ENCODE measurements at regions of chr18 and their contacts with region 1.

Region 1: DNA sequence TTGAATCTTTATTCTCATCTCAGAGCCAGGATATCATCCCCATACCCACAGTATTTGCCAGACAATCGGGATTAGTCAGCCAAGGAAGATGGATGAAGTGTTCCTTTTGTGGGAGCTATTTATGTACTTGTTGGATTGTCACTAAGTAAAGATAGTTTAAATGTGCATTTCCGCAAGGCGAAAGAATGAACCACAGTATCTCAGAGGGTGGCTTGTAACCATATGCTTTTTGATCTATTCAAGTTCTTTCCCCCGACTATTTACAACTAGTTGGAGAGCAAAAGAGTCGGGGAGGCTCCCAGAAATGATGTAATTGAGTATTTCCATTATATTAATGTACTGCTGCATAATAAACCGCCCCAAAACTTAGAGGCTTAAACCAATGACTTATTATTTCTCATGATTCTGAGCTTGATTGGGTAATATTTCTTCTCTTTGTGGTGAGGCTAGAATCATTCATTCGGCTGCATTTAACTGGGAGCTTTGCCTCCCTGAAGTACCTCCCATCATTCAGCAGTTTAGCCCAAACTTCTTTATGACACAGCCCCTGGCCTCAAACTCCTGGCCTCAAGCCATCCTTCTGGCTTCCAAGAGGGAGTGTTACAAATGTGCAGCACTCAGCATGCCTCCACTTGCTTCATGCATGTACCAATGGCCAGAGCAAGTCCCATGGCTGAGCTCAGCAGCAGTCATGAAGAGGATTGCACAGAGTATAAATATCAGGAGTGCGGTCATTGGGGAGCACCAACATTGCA is 423.7 kb downstream of the METTL4 start:
- DNase-seq: peak; percentile 78
- H3K4me3 ChIP-seq: no peak overlapping the region
- CTCF ChIP-seq: no peak

Region 2: DNA sequence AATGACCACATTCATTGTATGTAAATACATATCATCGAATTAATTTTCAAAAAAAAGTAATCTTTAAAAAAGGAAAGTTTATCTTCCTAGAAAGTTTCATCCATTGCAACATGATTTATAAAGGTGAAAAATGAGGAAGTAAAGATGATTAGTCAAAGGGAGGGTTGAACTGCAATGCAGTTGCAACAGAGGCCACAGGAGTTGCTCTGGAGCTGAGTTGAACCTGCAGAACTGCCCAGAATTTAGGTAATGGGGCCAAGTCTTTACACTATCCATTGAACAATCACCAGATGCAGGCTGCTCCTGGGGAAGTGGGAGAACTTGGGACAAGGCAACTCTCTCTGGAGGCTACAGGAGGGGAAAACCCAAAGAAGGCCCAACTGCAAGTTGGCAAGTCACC is 32.9 kb after region 1 on chr18:
- in situ Hi-C with region 1: no loop called
- DNase-seq: no peak
- H3K4me3 ChIP-seq: no peak overlapping the region
- CTCF ChIP-seq: no peak

Region 3: DNA sequence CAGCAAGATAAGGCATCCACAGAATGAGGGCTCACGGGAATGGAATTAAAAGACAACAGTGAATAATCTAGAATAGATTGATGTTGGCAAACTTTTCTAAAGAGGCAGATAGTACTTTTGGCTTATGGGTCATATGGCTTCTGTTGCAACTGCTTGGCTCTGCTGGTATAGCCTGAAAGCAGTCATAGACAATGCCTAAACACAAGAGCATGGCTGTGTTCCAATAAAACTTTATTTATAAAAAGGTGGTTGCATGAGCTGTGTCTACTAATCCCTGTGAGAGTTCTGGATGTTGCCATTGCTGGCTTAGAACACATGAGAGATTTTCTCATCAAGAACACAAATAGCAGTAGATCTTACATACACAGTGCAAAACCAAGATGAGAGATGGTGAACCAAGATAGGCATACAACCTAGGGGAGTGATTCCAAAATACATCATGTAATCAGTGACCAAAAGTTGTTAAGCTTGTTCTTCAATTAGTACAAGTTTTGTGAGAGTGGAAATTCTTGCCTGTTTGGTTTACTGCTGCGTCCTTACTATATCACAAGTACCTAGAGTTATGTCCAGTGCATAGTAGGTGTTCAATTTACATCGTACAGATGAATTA is 43.6 kb after region 1 on chr18:
- in situ Hi-C with region 1: loop called (anchors 5 kb)
- DNase-seq: no peak
- H3K4me3 ChIP-seq: no peak overlapping the region
- CTCF ChIP-seq: no peak